Mammary epithelial cell (primary cell): ENCODE measurements at regions of chr10 and their contacts with region 1.

Region 1: DNA sequence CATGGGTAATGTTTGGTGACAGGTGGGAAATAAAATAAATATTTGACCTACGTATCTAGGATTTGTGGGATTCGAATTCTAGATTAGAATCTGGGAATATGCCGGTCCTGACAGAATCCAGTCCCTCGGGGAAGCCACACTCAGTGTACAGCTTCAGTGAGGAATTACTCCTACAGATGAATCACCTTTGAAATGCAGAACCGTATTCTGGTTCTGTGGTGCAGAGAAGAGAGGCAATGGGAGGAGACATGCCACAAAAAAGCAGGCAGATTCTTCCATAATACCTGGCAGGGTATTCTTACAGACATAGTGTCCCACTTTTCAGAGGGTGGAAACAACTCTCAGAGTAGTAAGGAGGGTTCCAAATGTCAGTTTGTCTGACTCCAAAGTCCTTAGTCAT is 286.9 kb downstream of the SORCS1 start:
- DNase-seq: no peak
- H3K4me3 ChIP-seq: no peak overlapping the region
- H3K27ac ChIP-seq: no peak overlapping the region
- H3K4me1 ChIP-seq: no peaks in the 10 kb centered on the region
- H3K27me3 ChIP-seq: no peaks in the 10 kb centered on the region
- CTCF ChIP-seq: no peak

Region 2: GRCh38 chr10:106980495-106981451 is 103.2 kb after region 1 on chr10:
- CTCF ChIA-PET with region 1: no interaction called
- dilution Hi-C with region 1: loop called (anchors 5 kb)
- in situ Hi-C with region 1: no loop called
- intact Hi-C with region 1: no loop called
- DNase-seq: no peak
- H3K4me3 ChIP-seq: no peak overlapping the region
- H3K27ac ChIP-seq: no peak overlapping the region
- H3K4me1 ChIP-seq: no peaks in the 10 kb centered on the region
- H3K27me3 ChIP-seq: no peaks in the 10 kb centered on the region
- CTCF ChIP-seq: no peak